Activated naive CD4-positive, alpha-beta T cell treated with anti-CD3 and anti-CD28 coated beads, Interleukin-2, amount 10 ng/mL, durations not matched to agents 7 days and 5 days (primary cell): ENCODE measurements at regions of chr17 and their contacts with region 1.

Region 1: GRCh38 chr17:49280061-49280460 is 49.5 kb upstream of the PHOSPHO1 start:
- DNase-seq: no peak
- H3K4me3 Mint-ChIP-seq: no peak overlapping the region
- H3K27ac Mint-ChIP-seq: no peak overlapping the region
- H3K4me1 Mint-ChIP-seq: no peaks in the 10 kb centered on the region
- H3K27me3 Mint-ChIP-seq: peaks cover 22% of the 10 kb centered on the region

Region 2: GRCh38 chr17:49290690-49291359 is 10.8 kb after region 1 on chr17:
- CTCF ChIA-PET with region 1: interaction called, 10 read pairs
- DNase-seq: peak; percentile 35
- H3K4me3 Mint-ChIP-seq: no peak overlapping the region
- H3K27ac Mint-ChIP-seq: no peak overlapping the region
- H3K4me1 Mint-ChIP-seq: no peaks in the 10 kb centered on the region
- H3K27me3 Mint-ChIP-seq: no peaks in the 10 kb centered on the region